Activated T-helper 1 cell treated with anti-CD3 and anti-CD28 coated beads, Interleukin-12 subunit alpha, Interleukin-12 subunit beta, Interleukin-2, Interleukin-4 antibody, amounts not matched to agents 30 ng/mL and 10 ng/mL and 1 ng/mL, durations not matched to agents 14 hours and 24 hours and 36 hours (primary cell): ENCODE measurements at regions of chr17 and their contacts with region 1.

Region 1: DNA sequence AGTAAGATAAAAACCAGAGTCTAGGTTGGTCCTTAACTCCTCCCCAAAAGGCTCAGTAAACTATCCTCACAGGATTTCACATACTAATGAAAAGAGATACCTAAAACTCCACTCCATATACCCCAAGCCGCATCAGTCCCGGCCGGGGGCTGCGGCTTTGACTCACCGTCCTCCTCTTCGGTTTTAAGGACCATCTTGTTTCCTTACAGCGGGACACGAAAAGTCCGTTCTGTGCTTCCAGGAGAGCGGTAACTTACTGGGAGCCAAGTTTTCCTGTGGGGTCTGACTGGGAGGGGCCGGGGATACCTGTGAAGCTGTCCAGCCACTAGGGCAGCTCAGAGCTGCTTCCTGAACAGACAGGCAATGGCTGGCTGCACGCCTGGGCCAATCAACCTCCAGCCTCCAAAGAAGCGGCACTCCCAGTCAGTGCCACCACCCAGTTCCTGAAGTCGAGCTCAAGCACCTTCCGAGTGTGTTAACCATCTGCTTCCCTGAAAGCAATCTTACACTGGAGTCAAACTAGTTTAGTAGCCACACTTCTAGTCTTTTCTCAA is 45.5 kb downstream of the CYTH1 start:
- DNase-seq: peak; percentile 62
- H3K4me3 Mint-ChIP-seq: peak overlapping the region; percentile 84
- H3K27ac Mint-ChIP-seq: peak overlapping the region; percentile 89
- H3K4me1 Mint-ChIP-seq: peaks cover 76% of the 10 kb centered on the region
- H3K27me3 Mint-ChIP-seq: no peaks in the 10 kb centered on the region

Region 2: GRCh38 chr17:78723001-78723796 is 13.4 kb before region 1 on chr17:
- intact Hi-C with region 1: loop called (anchors 2 kb)
- DNase-seq: no peak
- H3K4me3 Mint-ChIP-seq: no peak overlapping the region
- H3K27ac Mint-ChIP-seq: peak overlapping the region; percentile 45
- H3K4me1 Mint-ChIP-seq: peaks cover 75% of the 10 kb centered on the region
- H3K27me3 Mint-ChIP-seq: no peaks in the 10 kb centered on the region

Region 3: GRCh38 chr17:78865682-78866390 is 129.2 kb after region 1 on chr17:
- intact Hi-C with region 1: no loop called
- DNase-seq: peak; percentile 51
- H3K4me3 Mint-ChIP-seq: no peak overlapping the region
- H3K27ac Mint-ChIP-seq: no peak overlapping the region
- H3K4me1 Mint-ChIP-seq: no peaks in the 10 kb centered on the region
- H3K27me3 Mint-ChIP-seq: peaks cover 8% of the 10 kb centered on the region